Activated T-helper 2 cell treated with anti-CD3 and anti-CD28 coated beads, Interferon-gamma antibody, Interleukin-2, Interleukin-4, amounts not matched to agents 10 μg/mL and 5 μg/mL and 100 μg/mL, durations not matched to agents 14 hours and 24 hours and 36 hours (primary cell): ENCODE measurements at regions of chr20 and their contacts with region 1.

Region 1: DNA sequence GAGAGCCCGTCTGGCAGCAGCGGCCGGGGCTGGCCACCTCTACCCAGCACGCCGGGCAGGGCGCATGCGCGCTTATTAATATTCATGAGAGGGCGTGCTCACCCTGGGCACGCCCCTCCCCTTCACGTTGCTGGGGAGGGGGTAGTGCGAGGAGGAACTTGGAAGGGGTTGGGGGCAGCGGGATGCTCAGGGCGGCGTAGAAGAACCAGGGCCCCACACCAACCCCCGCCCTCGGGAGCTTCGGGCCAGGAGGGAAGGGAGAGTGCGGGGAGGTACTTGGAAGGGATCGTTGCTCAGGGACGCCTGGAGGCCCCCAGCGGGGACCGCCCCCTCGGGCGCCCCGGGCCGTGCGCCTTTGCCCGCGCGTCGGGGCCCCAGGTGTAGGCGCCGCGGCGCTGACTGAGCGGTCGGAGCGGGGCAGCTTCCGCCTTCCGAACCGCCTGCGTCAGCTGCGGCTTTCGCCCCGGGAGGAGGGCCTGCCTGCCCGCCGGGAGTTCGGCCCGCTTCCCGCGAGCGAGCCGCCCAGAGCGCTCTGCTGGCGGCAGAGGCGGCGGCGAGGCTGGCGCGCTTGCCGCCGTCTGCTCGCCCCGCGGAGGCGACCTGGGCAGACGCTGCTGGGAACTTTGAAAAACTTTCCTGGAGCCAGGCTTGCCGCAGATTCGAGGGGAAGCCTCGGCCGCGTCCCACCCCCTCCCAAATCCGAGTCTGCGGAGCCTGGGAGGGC is at the start of gene JAG1:
- DNase-seq: peak; percentile 78
- H3K4me3 Mint-ChIP-seq: peak within 1 kb of the TSS; percentile 92
- H3K27ac Mint-ChIP-seq: peak within 1 kb of the TSS; percentile 87
- H3K4me1 Mint-ChIP-seq: peaks cover 30% of the 10 kb centered on the region
- H3K27me3 Mint-ChIP-seq: peaks cover 68% of the 10 kb centered on the region
- total RNA-seq, gene JAG1: 2.8 and 3.1 TPM in 2 replicates

Region 2: DNA sequence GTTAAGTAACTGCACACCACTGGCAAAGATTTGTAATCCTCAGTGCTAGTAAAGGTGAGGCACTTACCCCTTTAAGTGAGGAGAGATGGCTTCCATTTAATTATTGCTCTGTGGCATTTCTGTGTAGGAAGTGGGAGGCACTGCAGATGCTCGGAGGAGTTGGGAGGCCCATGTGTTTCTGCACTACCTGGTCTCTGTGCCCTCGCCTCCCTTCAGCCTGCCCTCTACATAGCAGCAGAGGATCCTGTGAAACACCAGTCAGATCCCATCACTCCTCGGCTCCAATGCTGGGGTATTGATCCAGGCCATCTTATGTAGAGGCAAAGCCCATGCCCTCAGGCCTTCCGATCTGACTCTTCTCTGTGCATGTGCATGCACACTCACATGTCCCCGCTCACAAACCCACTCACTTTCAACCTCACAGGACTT is 172.0 kb before region 1 on chr20:
- intact Hi-C with region 1: loop called (anchors 2 kb)
- DNase-seq: no peak
- H3K4me3 Mint-ChIP-seq: peak overlapping the region; percentile 78
- H3K27ac Mint-ChIP-seq: peak overlapping the region; percentile 87
- H3K4me1 Mint-ChIP-seq: peaks cover 50% of the 10 kb centered on the region
- H3K27me3 Mint-ChIP-seq: no peaks in the 10 kb centered on the region

Region 3: GRCh38 chr20:10626896-10627295 is 47.3 kb before region 1 on chr20:
- intact Hi-C with region 1: no loop called
- DNase-seq: no peak
- H3K4me3 Mint-ChIP-seq: no peak overlapping the region
- H3K27ac Mint-ChIP-seq: no peak overlapping the region
- H3K4me1 Mint-ChIP-seq: peaks cover 3% of the 10 kb centered on the region
- H3K27me3 Mint-ChIP-seq: no peaks in the 10 kb centered on the region

Region 4: DNA sequence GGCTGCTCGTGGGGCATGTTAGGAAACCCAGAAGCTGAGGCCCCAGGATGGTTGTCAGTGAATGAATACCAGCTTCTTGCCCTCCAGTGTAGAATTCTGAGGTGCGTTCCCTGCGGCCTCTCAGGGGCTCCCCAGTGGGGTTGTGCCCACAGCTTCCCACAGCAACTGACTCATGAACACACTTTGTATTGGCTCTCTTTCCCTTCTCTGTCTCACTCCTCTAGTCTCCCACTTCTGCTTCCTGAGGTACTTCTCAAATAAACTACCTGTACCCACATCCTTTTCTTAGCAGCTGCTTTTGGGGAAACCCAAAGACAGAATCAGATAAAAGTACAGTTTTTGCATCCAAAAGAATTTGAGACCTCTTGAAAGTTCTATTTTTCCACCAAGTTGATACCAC is 107.4 kb after region 1 on chr20:
- intact Hi-C with region 1: no loop called
- DNase-seq: no peak
- H3K4me3 Mint-ChIP-seq: no peak overlapping the region
- H3K27ac Mint-ChIP-seq: no peak overlapping the region
- H3K4me1 Mint-ChIP-seq: peaks cover 2% of the 10 kb centered on the region
- H3K27me3 Mint-ChIP-seq: peaks cover 1% of the 10 kb centered on the region